Lower leg skin (tissue), 4 donors: ENCODE measurements at regions of chr10 and their contacts with region 1.

Region 1: GRCh38 chr10:102476466-102477141 is 25.3 kb upstream of the C10orf95 start:
- DNase-seq: no peak
- H3K4me3 ChIP-seq: no peak overlapping the region
- CTCF ChIP-seq: no peak
- POLR2A ChIP-seq: no peak

Region 2: GRCh38 chr10:102254426-102254825 is 222.2 kb before region 1 on chr10:
- intact Hi-C with region 1: loop called (anchors 10 kb)
- DNase-seq: no peak
- H3K4me3 ChIP-seq: no peak overlapping the region
- CTCF ChIP-seq: no peak
- POLR2A ChIP-seq: no peak

Region 3: DNA sequence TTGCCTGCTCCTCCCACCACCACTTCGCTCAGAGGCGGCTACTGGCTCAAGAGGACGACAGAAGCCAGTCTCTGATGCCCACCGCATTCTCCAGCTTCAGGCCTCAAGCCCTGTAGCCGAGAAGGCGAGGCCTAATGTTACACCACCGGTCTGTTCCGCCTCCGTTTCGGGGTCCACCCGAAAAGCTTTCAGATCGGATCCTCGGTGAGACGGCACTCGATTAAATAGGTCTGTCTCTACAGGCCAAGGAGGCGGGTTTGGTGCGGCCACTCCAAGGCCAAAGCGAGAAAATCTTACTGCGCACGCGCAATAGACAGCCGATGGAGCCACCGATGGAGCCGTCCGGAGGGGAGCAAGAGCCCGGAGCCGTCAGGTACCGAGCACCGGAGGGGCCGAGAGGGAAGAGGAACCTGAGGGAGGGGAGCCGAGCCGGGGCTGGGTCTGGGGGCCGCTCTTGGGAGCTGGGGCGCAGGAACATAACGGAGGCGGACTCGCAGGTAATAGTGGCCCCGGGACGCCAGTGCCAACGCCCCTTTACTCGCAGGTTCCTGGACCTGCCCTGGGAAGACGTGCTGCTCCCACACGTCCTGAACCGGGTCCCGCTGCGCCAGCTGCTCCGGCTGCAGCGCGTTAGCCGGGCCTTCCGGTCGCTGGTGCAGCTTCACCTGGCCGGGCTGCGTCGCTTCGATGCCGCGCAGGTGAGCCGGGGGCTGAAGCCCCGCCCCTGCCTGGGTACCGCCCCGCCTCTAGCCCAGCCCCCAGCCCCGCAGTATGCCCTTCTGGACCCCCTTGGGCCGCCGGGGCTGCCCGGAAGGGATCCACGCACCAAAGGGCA is 55.6 kb before region 1 on chr10 and contains the start of gene FBXL15:
- intact Hi-C with region 1: loop called (anchors 10 kb)
- DNase-seq: peak; percentile 97 to 99
- H3K4me3 ChIP-seq: peak within 1 kb of the TSS; percentile 54
- CTCF ChIP-seq: no peak
- POLR2A ChIP-seq: no peak
- total RNA-seq, gene FBXL15: 18.2 to 25.3 (median 19.1) TPM